Colonic mucosa (tissue), 4 donors: ENCODE measurements at regions of chr12 and their contacts with region 1.

Region 1: GRCh38 chr12:52506858-52507715 is 13.1 kb downstream of the KRT5 start:
- DNase-seq: no peak
- H3K4me3 ChIP-seq: no peak overlapping the region
- H3K27ac ChIP-seq: no peak overlapping the region
- H3K4me1 ChIP-seq: no peaks in the 10 kb centered on the region
- H3K27me3 ChIP-seq: no peaks in the 10 kb centered on the region
- CTCF ChIP-seq: peak; percentile 47

Region 2: GRCh38 chr12:52390739-52391617 is 116.1 kb before region 1 on chr12:
- intact Hi-C with region 1: loop called (anchors 5 kb)
- DNase-seq: peak; percentile 39
- H3K4me3 ChIP-seq: no peak overlapping the region
- H3K27ac ChIP-seq: no peak overlapping the region
- H3K4me1 ChIP-seq: no peaks in the 10 kb centered on the region
- H3K27me3 ChIP-seq: no peaks in the 10 kb centered on the region
- CTCF ChIP-seq: no peak

Region 3: GRCh38 chr12:52440821-52441319 is 66.2 kb before region 1 on chr12:
- intact Hi-C with region 1: no loop called
- DNase-seq: no peak
- H3K4me3 ChIP-seq: no peak overlapping the region
- H3K27ac ChIP-seq: no peak overlapping the region
- H3K4me1 ChIP-seq: no peaks in the 10 kb centered on the region
- H3K27me3 ChIP-seq: no peaks in the 10 kb centered on the region
- CTCF ChIP-seq: no peak